ENCODE measurements at regions of chr17 and their contacts with region 1.

Region 1: DNA sequence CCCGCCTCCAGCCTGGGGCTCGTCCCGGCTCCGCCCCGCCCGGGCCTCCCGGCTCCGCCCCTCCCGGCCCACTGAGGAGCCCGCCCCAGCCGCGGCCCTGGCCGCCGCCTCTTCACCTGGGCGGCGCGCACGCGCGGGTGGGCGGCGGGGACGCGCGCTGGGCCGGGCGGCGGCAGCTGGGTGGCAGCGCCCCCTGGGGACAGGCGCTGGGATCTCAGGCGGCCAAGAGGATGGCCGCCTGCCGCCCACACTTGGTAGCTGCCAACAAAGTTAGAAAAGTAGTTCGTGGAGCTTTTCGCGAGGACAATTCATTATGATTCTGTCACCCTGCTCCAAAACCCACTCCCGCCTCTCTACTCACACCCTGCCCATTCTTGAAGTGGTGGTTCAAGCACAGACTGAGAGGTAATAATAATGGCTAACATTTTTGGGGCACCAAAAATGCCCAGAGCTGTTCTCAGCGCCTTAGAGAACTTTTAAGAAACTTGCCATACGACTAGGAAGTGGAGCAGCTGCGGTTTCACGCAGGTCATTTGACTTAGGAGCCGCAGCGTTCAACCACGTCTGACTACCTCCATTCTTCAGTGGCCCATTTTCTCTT is 340 bp upstream of the MYO1D start:
- DNase-seq: no peak
- H3K4me3 ChIP-seq: peak overlapping the region; percentile 82
- H3K27me3 ChIP-seq: no peaks in the 10 kb centered on the region; the same call in 1 of the 2 replicates
- CTCF ChIP-seq: peak; percentile 78

Region 2: DNA sequence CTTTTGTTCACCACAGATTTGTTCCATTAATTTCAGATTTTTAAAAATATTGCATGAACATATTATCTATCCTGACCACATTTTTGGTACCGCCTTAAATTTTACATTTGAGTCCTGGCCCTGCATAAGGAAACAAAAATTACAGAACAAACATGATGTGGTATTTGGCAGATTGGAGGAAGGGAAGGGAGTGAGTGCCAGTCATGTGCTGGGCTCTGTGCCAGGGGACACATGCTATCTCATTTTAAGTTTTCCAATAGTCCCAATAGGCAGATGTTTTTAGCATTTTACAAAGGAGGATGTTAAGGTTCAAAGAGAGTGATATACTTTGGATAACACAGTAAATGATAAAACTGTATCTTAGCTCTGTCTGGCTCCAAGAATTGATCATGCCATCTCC is 205.4 kb before region 1 on chr17:
- CTCF ChIA-PET with region 1: no interaction called
- POLR2A ChIA-PET with region 1: no interaction called
- DNase-seq: no peak
- H3K4me3 ChIP-seq: no peak overlapping the region
- H3K27me3 ChIP-seq: no peaks in the 10 kb centered on the region
- CTCF ChIP-seq: no peak

Region 3: GRCh38 chr17:32769839-32770238 is 107.4 kb before region 1 on chr17:
- CTCF ChIA-PET with region 1: interaction called, 12 read pairs
- POLR2A ChIA-PET with region 1: no interaction called
- DNase-seq: no peak
- H3K4me3 ChIP-seq: no peak overlapping the region
- H3K27me3 ChIP-seq: no peaks in the 10 kb centered on the region
- CTCF ChIP-seq: no peak

Region 4: GRCh38 chr17:32794533-32795246 is 82.6 kb before region 1 on chr17:
- CTCF ChIA-PET with region 1: interaction called, 26 read pairs
- POLR2A ChIA-PET with region 1: no interaction called
- DNase-seq: no peak
- H3K4me3 ChIP-seq: no peak overlapping the region
- H3K27me3 ChIP-seq: no peaks in the 10 kb centered on the region
- CTCF ChIP-seq: no peak

Region 5: DNA sequence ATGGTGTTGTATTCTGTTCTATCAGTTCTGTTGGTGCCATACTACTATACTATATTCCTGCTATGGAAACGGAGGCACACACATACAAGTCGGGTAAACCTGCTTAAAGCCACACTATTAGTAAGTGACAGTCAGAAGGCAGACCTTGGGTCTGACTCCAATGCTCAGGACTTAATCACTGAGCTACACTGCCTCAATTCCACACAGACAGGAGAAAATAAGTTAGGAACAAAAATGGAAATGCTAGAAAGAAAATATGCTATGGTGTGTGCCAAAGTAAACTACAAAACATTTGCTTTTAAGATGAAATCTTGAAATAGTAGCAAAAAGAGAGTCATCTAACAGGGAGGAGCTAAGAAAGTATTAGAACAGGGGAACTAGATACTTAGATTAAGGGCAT is 48.4 kb before region 1 on chr17:
- CTCF ChIA-PET with region 1: interaction called, 10 read pairs
- POLR2A ChIA-PET with region 1: no interaction called
- DNase-seq: no peak
- H3K4me3 ChIP-seq: no peak overlapping the region
- H3K27me3 ChIP-seq: no peaks in the 10 kb centered on the region
- CTCF ChIP-seq: no peak

Region 6: GRCh38 chr17:32896647-32897258 is 19.5 kb after region 1 on chr17:
- CTCF ChIA-PET with region 1: interaction called, 11 read pairs
- POLR2A ChIA-PET with region 1: no interaction called
- DNase-seq: no peak
- H3K4me3 ChIP-seq: no peak overlapping the region
- H3K27me3 ChIP-seq: no peaks in the 10 kb centered on the region
- CTCF ChIP-seq: no peak

Region 7: GRCh38 chr17:32936894-32937500 is 59.7 kb after region 1 on chr17:
- CTCF ChIA-PET with region 1: interaction called, 15 read pairs
- POLR2A ChIA-PET with region 1: no interaction called
- DNase-seq: no peak
- H3K4me3 ChIP-seq: no peak overlapping the region
- H3K27me3 ChIP-seq: no peaks in the 10 kb centered on the region
- CTCF ChIP-seq: peak; percentile 82

Measured in BJ (cell line).